PC-9 (cell line): ENCODE measurements at regions of chr1 and their contacts with region 1.

Region 1: GRCh38 chr1:223811634-223812415 is 33.9 kb downstream of the TP53BP2 start:
- DNase-seq: peak in 1 of 2 experiments; percentile 55
- H3K4me3 ChIP-seq: no peak overlapping the region
- H3K27ac ChIP-seq: peak overlapping the region; percentile 35
- H3K4me1 ChIP-seq: peaks cover 34% of the 10 kb centered on the region
- H3K27me3 ChIP-seq: no peaks in the 10 kb centered on the region
- CTCF ChIP-seq: peak; percentile 73

Region 2: GRCh38 chr1:223712850-223713494 is 98.9 kb before region 1 on chr1:
- CTCF ChIA-PET with region 1: no interaction called
- POLR2A ChIA-PET with region 1: no interaction called
- intact Hi-C with region 1: loop called (anchors 1 kb)
- DNase-seq: peak in 1 of 2 experiments; percentile 32
- H3K4me3 ChIP-seq: peak overlapping the region; percentile 79
- H3K27ac ChIP-seq: peak overlapping the region; percentile 92
- H3K4me1 ChIP-seq: peaks cover 78% of the 10 kb centered on the region
- H3K27me3 ChIP-seq: no peaks in the 10 kb centered on the region
- CTCF ChIP-seq: no peak

Region 3: GRCh38 chr1:223732992-223733798 is 78.6 kb before region 1 on chr1:
- CTCF ChIA-PET with region 1: interaction called, 10 read pairs
- POLR2A ChIA-PET with region 1: no interaction called
- intact Hi-C with region 1: no loop called
- DNase-seq: no peak
- H3K4me3 ChIP-seq: no peak overlapping the region
- H3K27ac ChIP-seq: 0 out of 2 replicates have a peak overlapping the region, but pooled peaks have one; percentile 12
- H3K4me1 ChIP-seq: peaks cover 37% of the 10 kb centered on the region
- H3K27me3 ChIP-seq: no peaks in the 10 kb centered on the region
- CTCF ChIP-seq: no peak

Region 4: GRCh38 chr1:223845810-223846682 is 34.2 kb after region 1 on chr1 and contains the start of gene TP53BP2:
- CTCF ChIA-PET with region 1: interaction called, 6 read pairs
- POLR2A ChIA-PET with region 1: interaction called, 3 read pairs
- intact Hi-C with region 1: loop called (anchors 1 kb)
- DNase-seq: peak; percentile 70 to 97
- H3K4me3 ChIP-seq: peak within 1 kb of the TSS; percentile 72
- H3K27ac ChIP-seq: peak within 1 kb of the TSS; percentile 95
- H3K4me1 ChIP-seq: peaks cover 44% of the 10 kb centered on the region
- H3K27me3 ChIP-seq: no peaks in the 10 kb centered on the region
- CTCF ChIP-seq: peak; percentile 66
- total RNA-seq, gene TP53BP2: 63.1 and 81.4 TPM in 2 replicates

Region 5: DNA sequence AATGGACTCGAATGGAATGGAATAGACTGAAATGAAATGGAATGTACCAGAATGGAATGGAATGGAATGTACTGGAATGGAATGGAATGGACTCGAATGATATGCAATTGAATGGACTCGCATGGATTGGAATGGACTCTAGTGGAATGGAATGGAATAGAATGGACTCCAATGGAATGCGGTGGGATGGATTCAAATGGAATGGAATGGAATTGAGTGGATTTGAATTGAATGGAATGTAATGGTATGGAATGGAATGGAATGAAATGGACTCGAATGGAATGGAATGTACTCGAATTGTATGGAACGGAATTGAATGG is 202.5 kb after region 1 on chr1:
- CTCF ChIA-PET with region 1: no interaction called
- POLR2A ChIA-PET with region 1: no interaction called
- intact Hi-C with region 1: no loop called
- DNase-seq: no peak
- H3K4me3 ChIP-seq: no peak overlapping the region
- H3K27ac ChIP-seq: no peak overlapping the region
- H3K4me1 ChIP-seq: no peaks in the 10 kb centered on the region
- H3K27me3 ChIP-seq: no peaks in the 10 kb centered on the region
- CTCF ChIP-seq: no peak

Region 6: DNA sequence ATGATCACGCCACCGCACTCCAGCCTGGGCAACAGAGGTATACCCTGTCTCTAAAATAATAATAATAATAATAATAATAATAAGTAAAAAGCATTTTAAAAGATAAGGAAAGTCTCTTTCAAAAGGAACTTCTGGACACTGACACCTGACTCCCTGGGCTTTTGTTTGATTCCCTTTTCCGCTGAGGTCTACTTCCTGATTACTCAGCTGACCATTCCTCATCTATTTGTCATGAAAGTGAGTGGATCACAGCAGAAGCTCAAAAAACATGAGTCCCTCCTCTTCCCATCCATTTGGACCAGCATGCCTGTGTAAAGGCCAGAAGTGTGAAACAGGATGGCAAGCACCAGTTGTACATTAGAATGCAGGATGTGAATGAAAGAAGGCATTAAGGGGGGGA is 240.9 kb after region 1 on chr1:
- CTCF ChIA-PET with region 1: no interaction called
- POLR2A ChIA-PET with region 1: no interaction called
- intact Hi-C with region 1: loop called (anchors 10 kb)
- DNase-seq: peak in 1 of 2 experiments; percentile 76
- H3K4me3 ChIP-seq: no peak overlapping the region
- H3K27ac ChIP-seq: peak overlapping the region; percentile 42
- H3K4me1 ChIP-seq: peaks cover 33% of the 10 kb centered on the region
- H3K27me3 ChIP-seq: no peaks in the 10 kb centered on the region
- CTCF ChIP-seq: no peak

Region 7: GRCh38 chr1:224106568-224107281 is 294.9 kb after region 1 on chr1:
- CTCF ChIA-PET with region 1: no interaction called
- POLR2A ChIA-PET with region 1: no interaction called
- intact Hi-C with region 1: loop called (anchors 5 kb)
- DNase-seq: peak; percentile 58 to 61
- H3K4me3 ChIP-seq: no peak overlapping the region
- H3K27ac ChIP-seq: no peak overlapping the region
- H3K4me1 ChIP-seq: peaks cover 6% of the 10 kb centered on the region; the same call in 1 of the 2 replicates
- H3K27me3 ChIP-seq: no peaks in the 10 kb centered on the region
- CTCF ChIP-seq: peak; percentile 58; the same call in 1 of the 2 replicates

Region 8: GRCh38 chr1:224329842-224330753 is 518.3 kb after region 1 on chr1 and contains the start of gene NVL:
- CTCF ChIA-PET with region 1: no interaction called
- POLR2A ChIA-PET with region 1: no interaction called
- intact Hi-C with region 1: loop called (anchors 5 kb)
- DNase-seq: peak; percentile 84 to 91
- H3K4me3 ChIP-seq: peak within 1 kb of the TSS; percentile 87
- H3K27ac ChIP-seq: peak within 1 kb of the TSS; percentile 78
- H3K4me1 ChIP-seq: peaks cover 16% of the 10 kb centered on the region
- H3K27me3 ChIP-seq: no peaks in the 10 kb centered on the region
- CTCF ChIP-seq: no peak
- total RNA-seq, gene NVL: 27.3 and 36.1 TPM in 2 replicates